Activated CD4-positive, alpha-beta T cell treated with anti-CD3 and anti-CD28 coated beads for 36 hours (primary cell): ENCODE measurements at regions of chr16 and their contacts with region 1.

Region 1: GRCh38 chr16:30957456-30958174 is at the start of gene SETD1A:
- DNase-seq: peak; percentile 99
- ATAC-seq: peak; percentile 89
- H3K4me3 Mint-ChIP-seq: peak within 1 kb of the TSS; percentile 93
- H3K27ac Mint-ChIP-seq: peak within 1 kb of the TSS; percentile 99
- H3K4me1 Mint-ChIP-seq: peaks cover 37% of the 10 kb centered on the region
- H3K27me3 Mint-ChIP-seq: no peaks in the 10 kb centered on the region
- total RNA-seq, gene SETD1A: 18.5 to 21.7 TPM

Region 2: DNA sequence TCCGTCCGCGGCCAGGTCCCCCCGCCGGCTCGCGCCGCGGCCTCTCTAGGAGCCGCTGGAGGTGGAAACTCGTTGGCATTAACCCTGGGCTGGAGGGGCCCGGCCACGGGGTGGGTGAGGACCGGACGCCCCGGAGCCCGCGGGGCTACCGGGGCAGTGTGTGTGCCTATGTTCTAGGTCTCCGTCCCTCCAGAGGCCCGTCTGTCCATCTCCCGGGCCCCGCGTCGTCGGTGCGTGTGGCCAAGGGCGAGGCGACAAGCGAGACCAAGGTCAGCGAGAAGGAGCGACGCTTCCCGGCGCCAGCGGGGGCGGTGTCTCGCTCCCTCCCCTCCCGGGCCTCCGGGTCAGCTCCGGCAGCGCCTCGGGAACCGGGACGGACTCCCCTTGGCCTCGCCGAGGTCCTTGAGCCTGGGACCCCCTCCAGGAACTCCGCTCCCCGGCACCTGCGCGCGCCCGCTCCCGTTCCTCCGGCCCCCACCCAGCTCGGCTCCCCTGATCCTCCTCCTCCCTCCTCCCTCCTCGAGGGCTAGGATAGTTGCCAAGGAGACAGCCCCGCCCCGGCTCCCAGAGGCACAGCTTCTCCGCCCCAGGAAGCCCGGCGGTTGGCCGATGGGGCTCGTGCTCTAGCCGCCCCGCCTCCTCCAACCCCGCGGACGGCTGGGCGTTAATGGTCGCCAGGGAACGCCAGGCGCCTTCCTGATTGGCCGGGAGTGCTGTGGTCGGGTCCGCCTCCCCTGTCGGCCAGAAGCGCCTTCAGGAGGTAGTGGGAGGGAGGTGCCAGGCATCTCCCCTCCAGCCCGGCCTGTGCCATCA is 430.6 kb before region 1 on chr16:
- CTCF ChIA-PET with region 1: no interaction called
- POLR2A ChIA-PET with region 1: no interaction called
- intact Hi-C with region 1: loop called in 1 of 2 experiments (anchors 1 kb)
- DNase-seq: peak; percentile 98
- ATAC-seq: peak; percentile 93
- H3K4me3 Mint-ChIP-seq: peak overlapping the region; percentile 55
- H3K27ac Mint-ChIP-seq: peak overlapping the region; percentile 62
- H3K4me1 Mint-ChIP-seq: peaks cover 37% of the 10 kb centered on the region
- H3K27me3 Mint-ChIP-seq: no peaks in the 10 kb centered on the region

Region 3: DNA sequence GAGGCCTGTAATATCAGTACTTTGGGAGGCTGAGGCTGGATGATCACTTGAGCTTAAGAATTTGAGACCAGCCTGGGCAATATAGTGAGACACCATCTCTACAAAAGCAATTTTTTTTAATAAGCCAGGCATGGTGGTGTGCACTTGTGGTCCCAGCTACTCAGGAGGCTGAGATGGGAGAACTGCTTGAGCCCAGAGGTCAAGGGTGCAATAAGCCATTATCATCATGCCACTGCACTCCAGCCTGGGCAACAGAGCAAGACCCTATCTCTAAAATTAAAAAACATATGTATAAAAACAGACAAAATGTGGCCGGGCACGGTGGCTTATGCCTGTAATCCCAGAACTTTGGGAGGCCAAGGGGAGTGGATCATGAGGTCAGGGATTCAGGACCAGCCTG is 369.0 kb before region 1 on chr16:
- CTCF ChIA-PET with region 1: no interaction called
- POLR2A ChIA-PET with region 1: no interaction called
- intact Hi-C with region 1: no loop called
- DNase-seq: no peak
- ATAC-seq: no peak
- H3K4me3 Mint-ChIP-seq: no peak overlapping the region
- H3K27ac Mint-ChIP-seq: no peak overlapping the region
- H3K4me1 Mint-ChIP-seq: peaks cover 26% of the 10 kb centered on the region
- H3K27me3 Mint-ChIP-seq: no peaks in the 10 kb centered on the region

Region 4: GRCh38 chr16:30602616-30603277 is 354.9 kb before region 1 on chr16:
- CTCF ChIA-PET with region 1: no interaction called
- POLR2A ChIA-PET with region 1: no interaction called
- intact Hi-C with region 1: no loop called
- DNase-seq: no peak
- ATAC-seq: no peak
- H3K4me3 Mint-ChIP-seq: no peak overlapping the region
- H3K27ac Mint-ChIP-seq: no peak overlapping the region
- H3K4me1 Mint-ChIP-seq: peaks cover 7% of the 10 kb centered on the region
- H3K27me3 Mint-ChIP-seq: no peaks in the 10 kb centered on the region

Region 5: GRCh38 chr16:30874821-30875717 is 82.5 kb before region 1 on chr16:
- CTCF ChIA-PET with region 1: interaction called, 3 read pairs
- POLR2A ChIA-PET with region 1: no interaction called
- intact Hi-C with region 1: loop called in 1 of 2 experiments (anchors 1 kb)
- DNase-seq: peak; percentile 94
- ATAC-seq: peak; percentile 82
- H3K4me3 Mint-ChIP-seq: peak overlapping the region; percentile 87
- H3K27ac Mint-ChIP-seq: peak overlapping the region; percentile 93
- H3K4me1 Mint-ChIP-seq: peaks cover 24% of the 10 kb centered on the region
- H3K27me3 Mint-ChIP-seq: no peaks in the 10 kb centered on the region

Region 6: DNA sequence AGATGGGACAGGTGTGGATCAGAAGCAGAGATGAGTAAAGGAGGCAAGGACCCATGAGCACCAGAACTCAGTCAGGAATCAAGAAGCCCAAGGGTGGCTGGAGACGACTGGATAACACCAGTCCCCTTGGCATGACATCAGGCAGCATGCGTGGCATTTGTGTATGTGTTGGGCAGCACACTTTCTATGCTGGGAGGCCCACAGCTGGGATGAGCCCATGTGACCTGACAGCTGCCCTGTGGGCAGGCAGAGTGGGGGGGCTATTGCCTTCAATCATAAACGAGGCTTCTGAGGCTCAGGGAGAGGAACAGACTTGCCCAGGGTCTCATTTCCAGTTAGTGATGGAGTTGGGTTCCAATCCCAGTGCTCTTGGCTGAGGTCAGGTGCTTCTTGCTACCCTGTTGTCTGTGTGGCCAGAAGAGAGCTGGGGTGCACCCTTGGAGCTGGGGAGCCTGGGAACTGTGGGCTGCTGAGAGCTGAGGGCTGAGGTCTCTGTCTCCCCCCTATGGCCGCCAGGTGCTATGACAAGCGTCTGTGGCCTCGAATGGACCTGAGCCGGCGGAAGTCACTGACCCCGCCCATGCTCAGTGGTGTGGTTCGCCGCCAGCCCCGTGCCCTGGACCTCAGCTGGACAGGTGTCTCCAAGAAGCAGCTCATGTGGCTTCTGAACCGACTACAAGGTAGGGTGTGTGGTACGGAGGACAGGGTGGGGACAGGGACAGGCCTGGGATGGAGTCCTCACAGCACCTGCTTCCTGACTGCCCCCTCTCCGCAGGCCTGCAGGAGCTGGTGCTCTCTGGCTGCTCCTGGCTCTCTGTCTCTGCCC is 15.8 kb before region 1 on chr16:
- CTCF ChIA-PET with region 1: interaction called, 14 read pairs
- POLR2A ChIA-PET with region 1: no interaction called
- intact Hi-C with region 1: no loop called
- DNase-seq: peak; percentile 83
- ATAC-seq: peak; percentile 94
- H3K4me3 Mint-ChIP-seq: peak overlapping the region; percentile 35
- H3K27ac Mint-ChIP-seq: peak overlapping the region; percentile 78
- H3K4me1 Mint-ChIP-seq: peaks cover 19% of the 10 kb centered on the region
- H3K27me3 Mint-ChIP-seq: no peaks in the 10 kb centered on the region

Region 7: GRCh38 chr16:31094424-31095120 is 137.0 kb after region 1 on chr16 and contains the start of gene VKORC1:
- CTCF ChIA-PET with region 1: no interaction called
- POLR2A ChIA-PET with region 1: no interaction called
- intact Hi-C with region 1: loop called in 1 of 2 experiments (anchors 1 kb)
- DNase-seq: peak; percentile 96
- ATAC-seq: peak; percentile 92
- H3K4me3 Mint-ChIP-seq: peak within 1 kb of the TSS; percentile 98
- H3K27ac Mint-ChIP-seq: peak within 1 kb of the TSS; percentile 89
- H3K4me1 Mint-ChIP-seq: peaks cover 25% of the 10 kb centered on the region
- H3K27me3 Mint-ChIP-seq: no peaks in the 10 kb centered on the region
- total RNA-seq, gene VKORC1: 59.6 to 64.2 TPM

Region 8: GRCh38 chr16:31142109-31143010 is 184.7 kb after region 1 on chr16:
- CTCF ChIA-PET with region 1: interaction called, 4 read pairs
- POLR2A ChIA-PET with region 1: no interaction called
- intact Hi-C with region 1: loop called (anchors 1 to 5 kb)
- DNase-seq: peak; percentile 100
- ATAC-seq: peak; percentile 96
- H3K4me3 Mint-ChIP-seq: peak overlapping the region; percentile 62
- H3K27ac Mint-ChIP-seq: peak overlapping the region; percentile 80
- H3K4me1 Mint-ChIP-seq: peaks cover 12% of the 10 kb centered on the region
- H3K27me3 Mint-ChIP-seq: no peaks in the 10 kb centered on the region

Region 9: GRCh38 chr16:31868691-31869167 is 911.1 kb after region 1 on chr16:
- CTCF ChIA-PET with region 1: no interaction called
- POLR2A ChIA-PET with region 1: no interaction called
- intact Hi-C with region 1: loop called in 1 of 2 experiments (anchors 10 kb)
- DNase-seq: peak; percentile 90
- ATAC-seq: peak; percentile 54
- H3K4me3 Mint-ChIP-seq: peak overlapping the region; percentile 63
- H3K27ac Mint-ChIP-seq: peak overlapping the region; percentile 91
- H3K4me1 Mint-ChIP-seq: peaks cover 55% of the 10 kb centered on the region
- H3K27me3 Mint-ChIP-seq: no peaks in the 10 kb centered on the region